ENCODE measurements at regions of chr13 and their contacts with region 1.

Region 1: GRCh38 chr13:99176309-99177276 is 24.1 kb upstream of the UBAC2 start:
- H3K4me3 ChIP-seq: no peak overlapping the region
- H3K27ac ChIP-seq: no peak overlapping the region
- H3K4me1 ChIP-seq: no peaks in the 10 kb centered on the region
- CTCF ChIP-seq: peak; percentile 67; the same call in 1 of the 2 replicates

Region 2: GRCh38 chr13:99191879-99192399 is 15.3 kb after region 1 on chr13:
- CTCF ChIA-PET with region 1: interaction called, 10 read pairs
- POLR2A ChIA-PET with region 1: interaction called, 3 read pairs
- H3K4me3 ChIP-seq: no peak overlapping the region
- H3K27ac ChIP-seq: 0 out of 2 replicates have a peak overlapping the region, but pooled peaks have one; percentile 37
- H3K4me1 ChIP-seq: peaks cover 14% of the 10 kb centered on the region
- CTCF ChIP-seq: no peak

Region 3: GRCh38 chr13:99258946-99259345 is 82.4 kb after region 1 on chr13:
- CTCF ChIA-PET with region 1: interaction called, 146 read pairs
- POLR2A ChIA-PET with region 1: no interaction called
- H3K4me3 ChIP-seq: no peak overlapping the region
- H3K27ac ChIP-seq: no peak overlapping the region
- H3K4me1 ChIP-seq: no peaks in the 10 kb centered on the region
- CTCF ChIP-seq: no peak

Region 4: DNA sequence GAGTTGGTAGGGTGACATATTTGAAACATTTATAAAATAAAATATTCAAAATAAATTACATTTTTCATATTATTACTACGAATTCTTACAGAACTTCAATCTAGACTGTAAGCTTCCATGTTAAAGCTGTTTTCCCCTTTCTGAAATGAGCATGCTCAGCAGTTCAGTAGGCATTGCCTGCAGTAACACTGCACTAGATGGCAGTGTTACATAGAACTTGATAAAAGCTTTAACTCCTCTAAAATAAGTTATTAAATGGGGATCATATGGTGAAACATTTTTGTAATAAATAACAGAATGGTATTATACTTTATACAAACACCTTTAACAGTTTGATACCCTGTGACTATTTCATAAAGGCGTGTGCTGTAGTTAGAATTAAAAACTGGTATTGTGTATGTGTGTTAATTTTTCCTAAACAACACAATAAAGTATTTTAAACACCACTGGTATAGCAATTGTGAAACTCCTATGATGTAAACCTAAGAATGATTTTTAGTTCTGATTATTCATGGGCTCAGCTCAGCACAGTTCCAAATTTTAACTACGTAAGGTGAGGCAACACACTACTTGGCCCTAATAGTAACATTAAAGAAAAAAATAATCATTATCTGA is 93.1 kb after region 1 on chr13:
- CTCF ChIA-PET with region 1: interaction called, 146 read pairs
- POLR2A ChIA-PET with region 1: no interaction called
- H3K4me3 ChIP-seq: no peak overlapping the region
- H3K27ac ChIP-seq: no peak overlapping the region
- H3K4me1 ChIP-seq: no peaks in the 10 kb centered on the region
- CTCF ChIP-seq: no peak